Activated CD4-positive, alpha-beta T cell treated with anti-CD3 and anti-CD28 coated beads for 36 hours (primary cell): ENCODE measurements at regions of chr3 and their contacts with region 1.

Region 1: DNA sequence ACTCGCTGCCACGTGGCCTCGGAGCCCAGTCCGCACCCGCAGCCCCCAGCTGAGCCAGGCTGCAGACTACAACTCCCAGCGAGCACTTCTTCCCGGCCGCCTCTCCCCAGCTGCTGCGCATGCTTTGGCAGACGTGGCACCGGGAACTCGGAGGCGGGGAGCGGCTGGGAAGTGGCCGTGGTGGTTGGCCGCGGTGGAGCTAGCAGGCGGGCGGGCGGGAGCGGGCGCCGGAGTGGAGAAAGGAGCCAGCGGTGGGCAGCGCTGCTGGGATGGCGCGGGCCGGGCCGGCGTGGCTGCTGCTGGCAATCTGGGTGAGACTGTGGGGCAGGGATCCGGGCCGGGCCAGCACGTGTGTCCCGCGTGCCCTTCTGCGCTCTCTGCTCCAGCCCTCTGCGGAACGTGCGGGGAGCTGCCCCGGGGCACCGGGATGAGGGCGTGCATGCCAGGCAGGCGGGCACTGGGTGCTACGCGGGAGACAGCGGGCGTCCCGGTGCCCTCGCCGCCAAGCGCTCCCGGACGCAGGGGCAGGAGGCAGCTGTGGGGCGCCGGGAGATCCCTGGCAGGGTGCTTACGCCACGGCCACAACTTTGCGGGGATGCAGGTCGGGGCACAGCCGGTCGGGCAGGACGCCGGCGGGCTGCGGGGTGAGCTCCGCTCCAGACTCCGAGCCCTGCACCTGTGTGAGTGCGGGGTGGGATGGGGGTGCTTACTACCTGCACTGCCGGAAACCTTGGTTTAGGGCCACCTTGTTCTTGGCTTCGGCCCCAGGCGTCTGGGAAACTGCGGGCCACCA is at the start of gene PDIA5:
- DNase-seq: peak; percentile 87
- ATAC-seq: peak; percentile 83
- H3K4me3 Mint-ChIP-seq: peak within 1 kb of the TSS; percentile 87
- H3K27ac Mint-ChIP-seq: peak within 1 kb of the TSS; percentile 80
- H3K4me1 Mint-ChIP-seq: peaks cover 40% of the 10 kb centered on the region
- H3K27me3 Mint-ChIP-seq: no peaks in the 10 kb centered on the region
- total RNA-seq, gene PDIA5: 19.5 to 20.7 TPM

Region 2: DNA sequence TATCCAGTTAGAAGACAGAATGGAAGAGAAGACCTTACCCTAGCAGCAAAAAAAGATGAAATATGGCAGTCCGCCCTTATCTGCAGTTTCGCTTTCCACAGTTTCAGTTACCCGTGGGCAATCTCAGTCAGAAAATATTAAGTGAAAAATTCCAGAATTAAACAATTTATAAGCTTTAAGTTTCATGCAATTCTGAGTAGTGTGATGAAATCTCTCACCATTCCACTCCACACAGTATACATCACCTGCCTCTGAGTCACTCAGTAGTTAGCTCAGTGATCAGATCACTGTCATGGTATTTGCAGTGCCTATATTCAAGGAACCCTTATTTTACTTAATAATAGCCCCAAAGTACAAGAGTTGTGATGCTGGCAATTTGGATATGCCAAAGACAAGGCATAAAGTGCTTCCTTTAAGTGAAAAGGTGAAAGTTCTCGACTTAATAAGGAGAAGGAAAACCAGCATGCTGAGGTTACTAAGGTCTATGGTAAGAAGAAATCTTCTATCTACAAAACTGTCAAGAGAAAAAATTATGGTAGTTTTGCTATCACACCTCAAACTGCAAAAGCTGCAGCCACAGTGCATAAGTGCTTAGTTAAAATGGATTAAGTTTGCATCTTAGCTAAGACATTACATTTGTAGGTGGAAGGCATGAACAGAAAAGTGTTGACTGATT is 321.6 kb before region 1 on chr3:
- CTCF ChIA-PET with region 1: no interaction called
- POLR2A ChIA-PET with region 1: no interaction called
- intact Hi-C with region 1: no loop called
- DNase-seq: no peak
- ATAC-seq: peak; percentile 66
- H3K4me3 Mint-ChIP-seq: no peak overlapping the region
- H3K27ac Mint-ChIP-seq: no peak overlapping the region
- H3K4me1 Mint-ChIP-seq: no peaks in the 10 kb centered on the region
- H3K27me3 Mint-ChIP-seq: no peaks in the 10 kb centered on the region

Region 3: DNA sequence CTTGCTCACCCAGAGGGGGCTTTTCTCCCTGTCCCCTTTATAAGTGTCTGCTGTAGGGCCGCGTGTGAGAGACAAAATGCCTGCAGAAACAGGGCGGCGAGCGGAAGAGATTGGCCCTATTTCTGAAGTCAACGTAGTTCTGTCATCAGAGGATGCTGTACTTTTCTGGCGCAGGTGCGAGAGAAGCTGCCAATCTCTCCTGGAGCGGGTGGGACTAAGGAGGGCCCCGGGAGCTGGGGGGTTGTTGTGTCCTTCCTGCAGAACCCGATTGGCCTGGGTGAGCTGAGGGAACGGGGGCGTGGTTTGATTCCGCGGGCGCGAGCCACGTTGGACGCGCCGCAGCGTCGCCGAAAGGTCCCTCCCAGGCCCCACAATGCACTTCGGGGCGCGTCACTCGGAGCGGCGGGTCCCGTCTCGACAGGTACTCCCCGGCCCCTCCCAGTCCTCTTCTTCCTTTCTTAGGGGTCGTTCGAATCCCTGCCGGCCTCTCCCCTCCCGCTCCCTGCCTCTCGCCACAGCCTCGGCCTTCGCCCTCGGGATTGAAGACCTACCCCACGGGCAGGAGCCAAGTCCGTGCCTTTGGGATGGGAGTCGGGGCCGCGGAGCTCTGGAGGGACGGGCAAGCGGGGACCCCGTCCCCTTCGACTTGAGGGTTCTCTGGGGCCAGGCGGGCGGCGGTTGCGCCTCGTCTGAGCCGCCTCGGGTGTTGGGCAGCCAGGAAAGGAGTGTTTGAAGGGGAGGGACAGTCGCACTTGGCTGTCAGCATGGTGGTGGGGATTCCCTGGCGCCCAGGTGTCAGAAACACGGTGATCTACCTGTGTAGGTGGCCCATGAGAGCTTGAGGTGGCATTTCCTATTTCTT is 134.7 kb after region 1 on chr3 and contains the start of gene SEC22A:
- CTCF ChIA-PET with region 1: no interaction called
- POLR2A ChIA-PET with region 1: no interaction called
- intact Hi-C with region 1: loop called in 1 of 2 experiments (anchors 1 kb)
- DNase-seq: peak; percentile 98
- ATAC-seq: peak; percentile 99
- H3K4me3 Mint-ChIP-seq: peak within 1 kb of the TSS; percentile 96
- H3K27ac Mint-ChIP-seq: peak within 1 kb of the TSS; percentile 97
- H3K4me1 Mint-ChIP-seq: peaks cover 28% of the 10 kb centered on the region
- H3K27me3 Mint-ChIP-seq: no peaks in the 10 kb centered on the region
- total RNA-seq, gene SEC22A: 13.2 to 16.3 TPM